ENCODE measurements at regions of chr10 and their contacts with region 1.

Region 1: GRCh38 chr10:15168781-15169554 is 475 bp upstream of the NMT2 start:
- DNase-seq: peak; percentile 88 to 98 (median 92)
- H3K4me3 ChIP-seq: peak overlapping the region; percentile 57
- H3K4me3 Mint-ChIP-seq: peak overlapping the region; percentile 77 to 97 (median 82)
- H3K27ac ChIP-seq: peak overlapping the region; percentile 52
- H3K27ac Mint-ChIP-seq: peak overlapping the region; percentile 64 to 94 (median 88)
- H3K4me1 ChIP-seq: peaks cover 61% of the 10 kb centered on the region
- H3K4me1 Mint-ChIP-seq: peaks cover 60 to 71% (median 70%) of the 10 kb centered on the region in 3 donors
- H3K27me3 ChIP-seq: no peaks in the 10 kb centered on the region
- H3K27me3 Mint-ChIP-seq: peaks cover 0 to 2% of the 10 kb centered on the region in 2 donors

Region 2: GRCh38 chr10:14959276-14960057 is 209.5 kb before region 1 on chr10 and contains the start of gene MEIG1:
- CTCF ChIA-PET with region 1: no interaction called
- POLR2A ChIA-PET with region 1: interaction called, 12 read pairs
- DNase-seq: peak; percentile 86 to 97 (median 93)
- H3K4me3 ChIP-seq: peak within 1 kb of the TSS; percentile 98
- H3K4me3 Mint-ChIP-seq: peak within 1 kb of the TSS; percentile 92 to 99 (median 97)
- H3K27ac ChIP-seq: peak within 1 kb of the TSS; percentile 92
- H3K27ac Mint-ChIP-seq: peak within 1 kb of the TSS; percentile 94 to 99 (median 97)
- H3K4me1 ChIP-seq: peaks cover 12% of the 10 kb centered on the region
- H3K4me1 Mint-ChIP-seq: peaks cover 24 to 40% (median 27%) of the 10 kb centered on the region in 3 donors
- H3K27me3 ChIP-seq: no peaks in the 10 kb centered on the region
- H3K27me3 Mint-ChIP-seq: no peaks in the 10 kb centered on the region
- total RNA-seq, gene MEIG1: 0.91 to 1.2 TPM

Region 3: GRCh38 chr10:15209827-15210509 is 41.0 kb after region 1 on chr10:
- CTCF ChIA-PET with region 1: interaction called, 15 read pairs
- POLR2A ChIA-PET with region 1: interaction called, 20 read pairs
- DNase-seq: peak; percentile 65 to 84 (median 71)
- H3K4me3 ChIP-seq: peak overlapping the region; percentile 48
- H3K4me3 Mint-ChIP-seq: peak overlapping the region; percentile 11 to 84 (median 65)
- H3K27ac ChIP-seq: no peak overlapping the region
- H3K27ac Mint-ChIP-seq: peak overlapping the region; percentile 70 to 96 (median 88)
- H3K4me1 ChIP-seq: peaks cover 39% of the 10 kb centered on the region
- H3K4me1 Mint-ChIP-seq: peaks cover 45 to 62% (median 55%) of the 10 kb centered on the region in 3 donors
- H3K27me3 ChIP-seq: no peaks in the 10 kb centered on the region
- H3K27me3 Mint-ChIP-seq: no peaks in the 10 kb centered on the region

Measured in CD8-positive, alpha-beta memory T cell (primary cell).